GM23248 (cell line): ENCODE measurements at regions of chr11 and their contacts with region 1.

Region 1: GRCh38 chr11:47373876-47374720 is 4.2 kb downstream of the SPI1 start:
- DNase-seq: peak; percentile 81
- H3K4me3 ChIP-seq: no peak overlapping the region
- H3K27ac ChIP-seq: no peak overlapping the region
- H3K4me1 ChIP-seq: peaks cover 3% of the 10 kb centered on the region; the same call in 1 of the 2 replicates
- H3K27me3 ChIP-seq: no peaks in the 10 kb centered on the region

Region 2: GRCh38 chr11:47328404-47329390 is 45.4 kb before region 1 on chr11:
- in situ Hi-C with region 1: no loop called
- DNase-seq: no peak
- H3K4me3 ChIP-seq: no peak overlapping the region
- H3K27ac ChIP-seq: no peak overlapping the region
- H3K4me1 ChIP-seq: no peaks in the 10 kb centered on the region
- H3K27me3 ChIP-seq: no peaks in the 10 kb centered on the region

Region 3: DNA sequence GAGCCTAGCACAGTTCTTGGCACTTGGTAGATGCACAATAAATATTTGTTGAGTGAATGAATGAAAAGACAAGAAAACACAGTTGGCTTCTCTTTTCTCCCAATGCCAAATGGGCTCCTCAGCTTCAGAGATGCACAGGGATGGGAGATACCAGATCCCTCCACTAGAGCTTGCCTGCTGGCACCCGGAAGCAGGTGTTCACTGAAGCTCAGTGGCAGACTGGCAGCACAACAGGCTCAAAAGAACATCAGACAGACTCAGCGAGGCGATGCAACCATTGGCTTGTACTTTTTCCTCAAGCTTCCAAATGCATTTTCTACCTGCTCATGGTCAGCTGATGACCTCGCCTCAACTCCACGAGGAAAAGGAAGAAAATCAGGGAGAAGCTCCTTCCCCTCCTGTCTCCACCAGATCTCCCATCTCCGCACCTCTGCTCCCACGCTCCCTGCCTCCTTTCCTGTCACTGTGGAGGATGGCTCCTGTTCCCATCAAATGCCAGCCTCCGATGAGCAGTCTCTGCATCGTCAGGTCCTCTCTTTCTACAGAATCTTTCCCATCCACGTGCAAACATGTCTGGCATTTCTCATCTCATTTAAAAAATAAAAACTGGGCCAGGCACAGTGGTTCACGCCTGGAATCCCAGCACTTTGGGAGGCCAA is 69.1 kb after region 1 on chr11:
- in situ Hi-C with region 1: loop called (anchors 10 kb)
- DNase-seq: no peak
- H3K4me3 ChIP-seq: no peak overlapping the region
- H3K27ac ChIP-seq: no peak overlapping the region
- H3K4me1 ChIP-seq: no peaks in the 10 kb centered on the region
- H3K27me3 ChIP-seq: no peaks in the 10 kb centered on the region